ENCODE measurements at regions of chr9 and their contacts with region 1.

Region 1: DNA sequence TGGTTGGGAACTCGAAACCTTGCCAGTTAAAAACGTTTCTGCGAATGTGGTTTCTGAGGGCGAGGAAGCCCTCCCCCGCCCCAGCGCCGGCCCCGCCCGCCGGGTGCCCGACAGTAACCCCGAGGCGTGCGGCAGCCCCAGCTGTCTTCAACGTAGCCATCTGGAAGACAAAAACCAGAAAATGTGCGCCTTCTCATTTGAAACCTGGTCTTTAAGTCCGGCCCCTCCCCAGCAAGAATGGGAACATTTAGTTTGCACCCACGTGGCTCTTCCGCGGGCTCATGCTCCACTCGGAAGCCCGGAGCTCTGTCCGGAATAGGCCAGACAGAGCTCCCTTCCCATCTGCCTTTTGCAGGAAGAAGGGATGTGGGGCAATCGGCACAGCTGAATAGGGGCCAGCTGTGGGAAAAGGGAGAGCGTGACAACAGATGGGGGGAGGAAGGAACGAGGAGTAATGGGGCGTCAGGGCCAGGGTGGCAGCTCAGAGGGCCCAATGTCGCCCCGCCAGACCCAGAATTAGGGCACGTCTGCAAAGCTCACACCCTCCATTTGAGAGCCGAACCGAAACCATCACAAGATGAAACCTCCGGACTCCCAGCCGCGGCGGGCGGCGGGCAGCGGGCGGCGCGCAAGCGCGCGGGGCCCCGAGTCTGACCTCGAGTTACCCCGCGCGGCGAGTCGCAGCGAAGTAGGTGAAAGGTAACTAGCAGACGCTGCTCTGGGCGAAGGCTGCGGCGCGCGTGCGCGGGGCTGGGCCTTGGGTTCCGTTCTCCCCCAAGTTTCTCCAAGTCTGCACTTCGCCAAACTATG is 63.4 kb upstream of the ABCA1 start:
- DNase-seq: peak; percentile 96
- ATAC-seq: peak; percentile 88

Region 2: GRCh38 chr9:104772714-104773510 is 218.4 kb before region 1 on chr9:
- intact Hi-C with region 1: loop called (anchors 2 kb)
- DNase-seq: no peak
- ATAC-seq: peak; percentile 57

Region 3: GRCh38 chr9:104914466-104914865 is 76.9 kb before region 1 on chr9:
- intact Hi-C with region 1: no loop called
- DNase-seq: no peak
- ATAC-seq: no peak

Region 4: DNA sequence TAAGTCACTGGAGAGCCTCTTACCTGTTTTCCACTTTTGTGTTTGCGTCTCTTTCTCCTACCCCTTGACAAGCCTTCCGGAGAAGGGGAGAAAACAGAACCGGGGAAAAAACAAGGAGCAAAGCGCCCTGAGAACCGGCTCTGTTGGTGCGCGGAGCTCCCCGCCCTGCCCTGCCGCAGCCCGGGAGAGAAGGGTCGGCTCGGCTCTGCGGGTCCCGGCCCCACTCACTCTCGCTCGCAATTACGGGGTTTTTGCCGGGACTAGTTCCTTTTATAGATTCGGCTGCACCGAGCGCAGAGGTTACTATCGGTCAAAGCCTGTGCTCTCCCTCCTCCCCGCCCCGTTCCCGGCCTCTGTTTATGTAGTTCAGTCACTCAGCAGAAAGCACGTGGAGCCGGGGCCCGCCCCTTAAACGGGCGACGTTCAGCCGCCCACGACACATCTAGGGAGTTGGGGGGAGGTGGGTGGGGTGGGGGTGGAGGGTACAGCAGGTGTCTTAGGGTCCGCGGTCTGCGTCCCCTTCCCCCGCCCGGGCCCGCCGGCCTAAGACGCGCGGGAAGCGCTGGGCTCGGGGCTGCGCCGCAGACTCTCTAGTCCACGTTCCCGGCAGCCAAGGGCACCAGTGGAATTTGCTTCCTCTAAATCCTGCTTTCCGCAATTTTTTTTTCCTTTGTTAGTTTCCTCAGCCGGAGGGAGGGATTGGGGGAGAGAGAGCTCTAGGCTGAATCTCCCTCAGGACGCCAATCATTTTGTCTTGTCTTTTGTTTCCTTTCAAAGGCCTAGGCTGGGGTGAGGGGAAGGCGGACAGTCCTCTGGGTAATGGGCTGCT is 63.2 kb before region 1 on chr9 and contains the start of gene ABCA1:
- intact Hi-C with region 1: loop called (anchors 1 kb)
- DNase-seq: peak; percentile 96
- ATAC-seq: peak; percentile 87
- total RNA-seq, gene ABCA1: 12.6 TPM

Region 5: DNA sequence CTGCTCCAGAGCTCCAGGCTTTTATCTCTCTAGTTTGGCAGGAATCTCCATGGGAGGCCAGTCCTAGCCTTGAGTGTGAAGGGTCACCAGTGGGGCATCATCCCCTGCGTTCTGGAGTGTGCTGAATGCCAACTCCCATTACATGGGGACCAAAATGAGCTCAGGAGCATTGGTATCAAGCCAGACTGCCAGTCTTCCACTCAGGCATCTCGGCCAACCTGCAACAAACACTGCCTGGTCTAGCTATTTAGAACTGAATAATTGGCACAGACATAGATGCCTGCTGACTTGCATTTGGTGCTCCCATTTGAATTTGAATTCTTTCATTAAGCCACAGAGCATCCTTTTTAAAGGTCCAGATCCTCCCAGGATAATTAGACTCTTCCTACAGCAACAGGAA is 53.1 kb after region 1 on chr9:
- intact Hi-C with region 1: loop called (anchors 1 kb)
- DNase-seq: no peak
- ATAC-seq: peak; percentile 85

Region 6: GRCh38 chr9:105054501-105054928 is 63.2 kb after region 1 on chr9:
- intact Hi-C with region 1: no loop called
- DNase-seq: no peak
- ATAC-seq: no peak

Region 7: DNA sequence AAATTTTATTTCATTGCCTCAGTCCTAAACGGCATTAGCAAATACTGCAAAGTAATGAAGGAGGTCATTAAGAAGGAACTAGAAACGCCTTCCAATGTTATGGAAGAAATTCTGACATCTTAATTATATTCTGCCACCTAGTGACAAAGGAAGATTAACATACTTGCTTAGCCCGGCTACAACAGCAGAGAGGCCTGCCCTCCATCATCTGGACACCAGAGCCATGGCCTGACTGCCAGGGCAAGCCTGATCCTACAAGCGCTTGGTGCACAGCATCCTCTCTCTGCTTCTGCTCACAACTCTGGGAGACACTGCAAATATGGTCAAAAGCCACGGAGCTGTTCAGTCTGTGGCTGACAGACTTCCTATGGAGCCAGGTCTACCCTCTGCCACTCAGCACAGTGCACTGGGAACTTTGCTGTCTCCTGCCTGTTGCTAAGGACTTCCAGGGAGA is 165.8 kb after region 1 on chr9:
- intact Hi-C with region 1: loop called (anchors 1 kb)
- DNase-seq: no peak
- ATAC-seq: peak; percentile 88

Measured in Right ventricle myocardium inferior (tissue), 1 donor.